SK-N-SH (cell line): ENCODE measurements at regions of chr5 and their contacts with region 1.

Region 1: GRCh38 chr5:43105369-43106289 is 15.1 kb upstream of the ZNF131 start:
- DNase-seq: peak; percentile 87
- H3K4me3 ChIP-seq: peak overlapping the region; percentile 45 to 64
- H3K27ac ChIP-seq: peak overlapping the region; percentile 56 to 65
- H3K4me1 ChIP-seq: peaks cover 0 to 2% of the 10 kb centered on the region in 2 experiments; a peak in 1 of 4 replicates
- H3K27me3 ChIP-seq: no peaks in the 10 kb centered on the region
- CTCF ChIP-seq: peak; percentile 100
- EP300 ChIP-seq: no peak
- RAD21 ChIP-seq: peak; percentile 81

Region 2: DNA sequence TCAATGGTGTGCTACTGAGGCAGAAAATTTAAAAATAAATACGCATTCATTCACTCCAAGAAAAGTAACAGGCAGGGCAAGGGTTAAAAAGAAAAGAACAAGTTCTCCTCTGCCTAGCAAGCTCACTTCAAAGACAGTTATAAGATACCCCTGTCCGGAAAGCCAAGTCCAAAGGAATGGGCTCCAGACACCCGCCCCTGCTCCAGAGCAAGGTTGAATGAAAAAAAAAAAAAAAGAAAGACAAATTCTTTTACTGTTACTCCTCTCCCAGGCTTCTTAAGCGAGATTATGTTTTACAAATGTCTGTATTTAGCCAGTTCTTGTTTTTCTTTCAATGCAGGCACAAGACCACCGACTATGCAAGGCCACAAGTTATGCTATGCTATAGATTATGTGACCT is 56.4 kb before region 1 on chr5:
- CTCF ChIA-PET with region 1: interaction called, 27 read pairs
- POLR2A ChIA-PET with region 1: no interaction called
- DNase-seq: no peak
- H3K4me3 ChIP-seq: no peak overlapping the region
- H3K27ac ChIP-seq: no peak overlapping the region
- H3K4me1 ChIP-seq: peaks cover 0 to 9% of the 10 kb centered on the region in 2 experiments; a peak in 1 of 4 replicates
- H3K27me3 ChIP-seq: no peaks in the 10 kb centered on the region
- CTCF ChIP-seq: no peak
- EP300 ChIP-seq: no peak
- RAD21 ChIP-seq: no peak

Region 3: DNA sequence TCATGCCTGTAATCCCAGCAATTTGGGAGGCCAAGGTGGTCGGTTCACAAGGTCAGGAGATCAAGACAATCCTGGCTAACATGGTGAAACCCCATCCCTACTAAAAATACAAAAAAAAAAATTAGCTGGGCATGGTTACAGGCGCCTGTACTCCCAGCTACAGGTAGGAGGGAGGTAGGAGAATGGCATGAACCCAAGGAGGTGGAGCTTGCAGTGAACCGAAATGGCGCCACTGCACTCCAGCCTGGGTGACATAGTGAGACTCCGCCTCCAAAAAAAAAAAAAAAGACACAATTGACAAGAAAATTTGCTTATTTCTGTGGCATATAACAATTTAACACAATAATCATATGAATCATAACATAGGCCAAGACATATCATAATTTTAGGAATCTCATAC is 20.2 kb before region 1 on chr5:
- CTCF ChIA-PET with region 1: interaction called, 35 read pairs
- POLR2A ChIA-PET with region 1: interaction called, 3 read pairs
- DNase-seq: no peak
- H3K4me3 ChIP-seq: no peak overlapping the region
- H3K27ac ChIP-seq: no peak overlapping the region
- H3K4me1 ChIP-seq: peaks cover 0 to 6% of the 10 kb centered on the region in 2 experiments; a peak in 2 of 4 replicates
- H3K27me3 ChIP-seq: no peaks in the 10 kb centered on the region
- CTCF ChIP-seq: no peak
- EP300 ChIP-seq: no peak
- RAD21 ChIP-seq: no peak

Region 4: DNA sequence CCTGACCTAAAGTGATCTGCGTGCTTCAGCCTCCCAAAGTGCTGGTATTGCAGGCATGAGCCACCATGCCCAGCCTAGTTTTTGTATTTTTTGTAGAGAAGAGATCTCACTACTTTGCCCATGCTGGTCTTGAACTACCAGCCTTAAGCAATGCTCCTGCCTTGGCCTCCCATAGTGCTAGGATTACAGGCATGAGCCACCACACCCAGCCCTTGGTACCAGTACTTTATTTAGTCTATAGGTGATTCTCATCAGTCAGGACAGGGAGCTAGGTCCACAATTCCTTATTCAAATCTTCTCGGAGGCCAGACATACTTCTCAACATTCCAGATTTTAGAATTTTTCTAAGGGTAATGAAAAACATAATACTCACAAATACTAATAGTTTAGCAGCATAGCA is 23.5 kb after region 1 on chr5:
- CTCF ChIA-PET with region 1: interaction called, 16 read pairs
- POLR2A ChIA-PET with region 1: no interaction called
- DNase-seq: no peak
- H3K4me3 ChIP-seq: no peak overlapping the region
- H3K27ac ChIP-seq: no peak overlapping the region
- H3K4me1 ChIP-seq: peaks cover 0 to under 1% of the 10 kb centered on the region in 2 experiments; a peak in 2 of 4 replicates
- H3K27me3 ChIP-seq: no peaks in the 10 kb centered on the region
- CTCF ChIP-seq: no peak
- EP300 ChIP-seq: no peak
- RAD21 ChIP-seq: no peak